ENCODE measurements at regions of chr3 and their contacts with region 1.

Region 1: DNA sequence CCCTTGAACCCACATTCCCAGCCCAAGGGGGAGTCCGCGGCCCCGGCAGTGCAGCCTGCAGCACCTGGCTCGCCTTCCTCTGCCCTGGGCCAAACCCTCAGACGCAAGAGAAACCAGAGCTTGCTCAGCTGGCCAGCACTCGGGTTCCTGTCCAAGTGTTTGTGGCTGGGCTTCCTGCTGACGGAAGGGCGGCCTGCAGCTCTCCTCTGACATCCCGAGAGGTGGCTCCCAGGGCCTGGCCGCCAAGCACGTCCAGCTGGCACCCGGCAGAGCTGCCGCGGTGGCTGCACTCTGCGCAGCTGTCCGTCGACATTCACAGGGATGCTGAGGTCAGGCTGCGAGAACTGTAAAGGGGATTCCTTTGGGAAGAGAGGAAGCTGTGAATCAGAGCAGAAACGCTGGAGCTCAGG is 85.6 kb downstream of the CPN2 start:
- DNase-seq: peak; percentile 93 to 97 (median 94)
- ATAC-seq: peak; percentile 80 to 88 (median 81)
- H3K4me3 ChIP-seq: peak overlapping the region in 4 of 12 donors; percentile 2 to 25 (median 6)
- H3K27ac ChIP-seq: peak overlapping the region in 11 of 12 donors; percentile 56 to 93 (median 80)
- H3K4me1 ChIP-seq: peaks cover 9 to 62% (median 47%) of the 10 kb centered on the region in 12 donors
- H3K27me3 ChIP-seq: no peaks in the 10 kb centered on the region
- CTCF ChIP-seq: peak in 1 of 12 donors; percentile 19
- POLR2A ChIP-seq: no peak

Region 2: GRCh38 chr3:193780810-193781472 is 484.5 kb before region 1 on chr3:
- intact Hi-C with region 1: loop called in 1 of 10 experiments (anchors 5 kb)
- DNase-seq: peak; percentile 66 to 84 (median 78)
- ATAC-seq: peak; percentile 78 to 94 (median 91)
- H3K4me3 ChIP-seq: no peak overlapping the region
- H3K27ac ChIP-seq: peak overlapping the region in 1 of 12 donors; percentile 44
- H3K4me1 ChIP-seq: peaks cover 0 to 16% (median 7%) of the 10 kb centered on the region in 12 donors
- H3K27me3 ChIP-seq: peaks cover 0 to 61% (median 29%) of the 10 kb centered on the region in 9 donors
- CTCF ChIP-seq: peak; percentile 57 to 87 (median 80)
- POLR2A ChIP-seq: no peak

Region 3: GRCh38 chr3:193982258-193982659 is 283.2 kb before region 1 on chr3:
- intact Hi-C with region 1: loop called in 1 of 10 experiments (anchors 5 kb)
- DNase-seq: peak; percentile 82 to 89 (median 86)
- ATAC-seq: peak; percentile 78 to 88 (median 86)
- H3K4me3 ChIP-seq: no peak overlapping the region
- H3K27ac ChIP-seq: peak overlapping the region in 4 of 12 donors; percentile 10 to 26 (median 16)
- H3K4me1 ChIP-seq: peaks cover 0 to 58% (median 32%) of the 10 kb centered on the region in 12 donors
- H3K27me3 ChIP-seq: peaks cover 0 to 8% (median 0%) of the 10 kb centered on the region in 9 donors
- CTCF ChIP-seq: no peak
- POLR2A ChIP-seq: no peak

Region 4: DNA sequence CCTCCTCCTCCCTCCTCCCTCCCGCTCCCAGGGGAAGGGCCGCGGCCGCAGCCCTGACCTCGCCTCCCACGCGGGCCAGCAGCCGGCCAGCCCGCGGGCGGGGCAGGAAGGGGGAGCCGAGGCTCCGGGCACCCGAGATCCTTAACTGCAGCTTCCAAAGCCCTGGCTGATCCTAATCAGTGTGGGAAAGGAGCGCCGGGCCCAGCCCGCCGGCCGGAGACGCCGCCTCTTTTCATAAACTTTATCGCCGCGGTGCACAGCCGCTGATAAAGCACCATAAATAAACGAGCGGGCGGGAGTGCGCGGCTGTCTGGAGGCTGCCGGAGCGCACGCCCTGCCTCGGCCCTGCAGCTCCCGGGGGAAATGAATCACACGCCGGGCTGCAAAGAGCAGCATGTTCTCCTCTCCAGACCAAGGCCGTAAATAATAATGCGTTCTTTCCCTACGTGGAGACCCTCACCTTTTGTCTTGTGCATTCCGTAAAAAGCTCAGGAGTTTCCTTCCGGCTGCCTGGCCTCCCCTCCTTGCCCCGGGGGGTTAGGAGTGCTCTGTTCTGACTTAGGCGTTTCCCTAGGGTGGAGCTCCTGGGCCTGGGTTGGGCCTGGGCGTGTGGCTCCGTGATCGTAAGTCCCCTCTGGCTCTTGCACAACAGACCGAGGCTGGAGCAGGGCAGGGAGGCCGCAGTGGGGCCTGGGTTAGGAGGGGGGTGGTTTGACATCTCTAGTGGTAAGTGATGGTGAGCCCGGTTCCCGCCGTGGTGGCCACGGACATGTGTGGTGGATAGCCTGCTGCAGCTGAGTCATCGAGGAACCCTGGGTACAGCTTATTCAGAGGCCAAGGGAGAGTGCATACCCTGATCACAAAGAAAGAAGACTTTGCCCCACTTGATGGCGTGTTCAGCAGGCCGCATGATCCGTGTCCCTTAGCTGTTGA is 262.1 kb before region 1 on chr3:
- intact Hi-C with region 1: loop called in 7 of 10 experiments (anchors 1 to 5 kb)
- DNase-seq: peak; percentile 92 to 95 (median 93)
- ATAC-seq: peak; percentile 85 to 95 (median 94)
- H3K4me3 ChIP-seq: peak overlapping the region in 11 of 12 donors; percentile 1 to 54 (median 51)
- H3K27ac ChIP-seq: peak overlapping the region; percentile 40 to 85 (median 74)
- H3K4me1 ChIP-seq: peaks cover 0 to 42% (median 31%) of the 10 kb centered on the region in 12 donors
- H3K27me3 ChIP-seq: peaks cover 0 to 13% (median 0%) of the 10 kb centered on the region in 9 donors
- CTCF ChIP-seq: no peak
- POLR2A ChIP-seq: no peak

Region 5: DNA sequence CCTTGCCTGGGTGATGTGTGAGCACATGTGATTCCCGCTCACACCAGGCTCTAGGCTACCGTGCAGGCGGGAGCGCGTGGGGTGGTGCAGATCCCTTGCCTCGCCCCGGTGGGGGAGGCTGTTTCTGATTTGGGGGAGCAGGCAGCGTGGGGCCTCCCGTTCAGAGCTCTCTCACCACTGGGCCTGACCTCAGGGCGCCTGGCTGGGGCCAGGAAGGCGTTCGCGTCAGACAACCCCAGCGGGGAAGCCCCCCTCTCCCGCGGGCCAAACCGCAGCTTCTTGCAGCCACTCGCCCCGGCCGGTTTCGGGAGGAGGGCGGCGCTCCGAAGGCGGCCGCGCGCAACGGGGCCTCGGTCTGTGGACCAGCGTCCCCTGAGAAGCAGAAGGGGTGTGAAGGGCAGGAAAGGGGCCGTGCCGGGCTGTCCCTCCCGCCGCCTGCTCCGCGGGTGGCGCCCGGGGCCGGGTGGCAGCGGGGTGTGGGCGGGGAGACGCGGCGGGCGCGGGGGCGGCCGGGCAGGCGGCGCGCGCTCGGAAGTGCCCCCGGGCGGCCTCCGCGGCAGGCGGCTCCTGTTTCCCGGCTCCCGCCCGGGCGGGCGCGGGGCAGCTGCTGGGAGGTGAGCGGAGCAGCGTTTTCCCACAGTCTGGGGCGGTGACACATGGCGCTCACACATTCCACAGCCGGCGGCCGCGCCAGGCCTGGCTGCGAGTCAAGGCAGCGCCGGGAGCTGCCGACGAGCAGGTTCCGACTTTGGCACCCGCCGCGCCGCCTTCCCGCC is 194.7 kb before region 1 on chr3:
- intact Hi-C with region 1: loop called in 4 of 10 experiments (anchors 5 to 10 kb)
- DNase-seq: peak; percentile 88 to 93 (median 93)
- ATAC-seq: peak; percentile 89 to 92 (median 92)
- H3K4me3 ChIP-seq: peak overlapping the region; percentile 8 to 64 (median 53)
- H3K27ac ChIP-seq: peak overlapping the region; percentile 67 to 97 (median 86)
- H3K4me1 ChIP-seq: peaks cover 3 to 23% (median 15%) of the 10 kb centered on the region in 12 donors
- H3K27me3 ChIP-seq: peaks cover 0 to 29% (median 0%) of the 10 kb centered on the region in 9 donors
- CTCF ChIP-seq: no peak
- POLR2A ChIP-seq: no peak

Region 6: GRCh38 chr3:194141415-194142155 is 123.9 kb before region 1 on chr3:
- intact Hi-C with region 1: loop called in 9 of 10 experiments (anchors 1 to 5 kb)
- DNase-seq: peak; percentile 94 to 96 (median 95)
- ATAC-seq: peak; percentile 74 to 86 (median 80)
- H3K4me3 ChIP-seq: peak overlapping the region in 11 of 12 donors; percentile 2 to 74 (median 49)
- H3K27ac ChIP-seq: peak overlapping the region; percentile 87 to 99 (median 98)
- H3K4me1 ChIP-seq: peaks cover 0 to 63% (median 41%) of the 10 kb centered on the region in 12 donors
- H3K27me3 ChIP-seq: peaks cover 0 to 44% (median 0%) of the 10 kb centered on the region in 9 donors
- CTCF ChIP-seq: peak in 2 of 12 donors; percentile 18 to 31
- POLR2A ChIP-seq: no peak

Region 7: DNA sequence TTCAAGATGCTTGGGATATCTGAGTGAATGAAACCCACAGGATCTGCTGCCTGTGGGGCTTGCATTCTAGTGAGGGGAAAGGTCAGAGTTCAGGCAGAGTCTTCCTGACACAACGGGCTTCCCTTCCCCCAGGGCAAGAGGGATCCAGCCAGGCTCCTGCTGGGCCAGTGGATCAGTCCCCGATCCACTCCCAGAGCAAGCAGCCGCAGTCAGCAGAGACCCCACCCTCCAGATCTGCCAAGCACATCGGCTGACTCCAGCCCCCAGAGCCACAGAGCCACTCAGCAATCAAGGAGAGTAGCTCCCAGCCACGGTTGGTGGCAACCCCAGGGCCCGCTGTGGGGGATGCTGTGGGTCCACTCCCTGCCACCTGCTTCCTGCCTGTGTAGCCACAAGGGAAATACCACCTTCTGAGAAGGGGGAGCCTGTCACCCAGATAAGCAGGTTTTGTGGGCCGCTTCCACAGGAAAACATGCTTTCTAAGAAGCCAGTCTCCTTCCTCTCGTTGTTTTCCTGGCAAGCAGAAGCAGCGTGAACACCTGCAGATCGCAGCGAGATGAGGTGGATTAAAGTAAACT is 40.7 kb after region 1 on chr3:
- intact Hi-C with region 1: loop called in 4 of 10 experiments (anchors 5 kb)
- DNase-seq: peak in 1 of 5 donors; percentile 15
- ATAC-seq: peak in 1 of 4 donors; percentile 12
- H3K4me3 ChIP-seq: no peak overlapping the region
- H3K27ac ChIP-seq: no peak overlapping the region
- H3K4me1 ChIP-seq: peaks cover 0 to 18% (median 0%) of the 10 kb centered on the region in 12 donors
- H3K27me3 ChIP-seq: peaks cover 0 to 20% (median 0%) of the 10 kb centered on the region in 9 donors
- CTCF ChIP-seq: no peak
- POLR2A ChIP-seq: no peak

Measured in heart left ventricle (tissue), 16 donors.